A673 (cell line): ENCODE measurements at regions of chr7 and their contacts with region 1.

Region 1: GRCh38 chr7:129262324-129262723 is 37.5 kb downstream of the AHCYL2 start:
- DNase-seq: no peak
- H3K4me3 ChIP-seq: no peak overlapping the region
- H3K27ac ChIP-seq: no peak overlapping the region
- H3K4me1 ChIP-seq: peaks cover 31% of the 10 kb centered on the region
- H3K27me3 ChIP-seq: no peaks in the 10 kb centered on the region
- CTCF ChIP-seq: no peak

Region 2: DNA sequence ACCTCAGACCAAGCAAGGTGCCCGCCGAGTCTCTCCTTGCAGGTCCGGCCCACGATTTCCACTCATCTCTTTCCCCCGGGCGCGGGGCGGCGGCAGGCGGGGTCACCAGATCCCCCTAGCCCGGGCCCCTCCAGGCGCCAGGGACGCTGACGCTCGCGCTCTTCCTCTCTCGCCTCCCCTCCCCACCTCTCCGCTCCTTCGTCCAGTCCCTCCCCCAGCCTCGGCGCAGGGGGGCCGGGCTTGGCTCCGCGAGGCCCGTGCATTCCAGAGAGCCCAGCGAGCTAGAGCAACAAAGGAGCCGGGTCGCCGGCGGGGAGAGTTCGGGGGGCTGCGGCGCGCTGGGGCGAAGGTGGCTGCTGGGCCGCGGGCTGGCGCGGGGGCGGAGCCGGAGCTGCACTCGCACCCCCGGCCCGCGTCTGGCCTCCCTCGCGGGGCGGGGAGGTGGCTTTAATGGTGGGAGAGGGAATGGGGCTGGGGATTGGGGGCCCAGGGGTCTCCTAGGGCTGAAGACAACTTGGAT is 73.9 kb before region 1 on chr7 and contains the start of gene SMO:
- CTCF ChIA-PET with region 1: no interaction called
- POLR2A ChIA-PET with region 1: interaction called, 10 read pairs
- intact Hi-C with region 1: no loop called
- DNase-seq: peak; percentile 74
- H3K4me3 ChIP-seq: peak within 1 kb of the TSS; percentile 83
- H3K27ac ChIP-seq: peak within 1 kb of the TSS; percentile 94
- H3K4me1 ChIP-seq: peaks cover 11% of the 10 kb centered on the region
- H3K27me3 ChIP-seq: no peaks in the 10 kb centered on the region
- CTCF ChIP-seq: no peak
- total RNA-seq, gene SMO: 40.3 and 40.8 TPM in 2 replicates